IMR-90 (cell line): ENCODE measurements at regions of chr13 and their contacts with region 1.

Region 1: GRCh38 chr13:48094781-48095502 is at the start of gene MED4:
- DNase-seq: peak; percentile 91
- ATAC-seq: peak; percentile 99
- H3K4me3 ChIP-seq: peak within 1 kb of the TSS; percentile 73
- H3K27ac ChIP-seq: peak within 1 kb of the TSS; percentile 72
- H3K4me1 ChIP-seq: peaks cover 2% of the 10 kb centered on the region; the same call in 1 of the 2 replicates
- H3K27me3 ChIP-seq: no peaks in the 10 kb centered on the region
- CTCF ChIP-seq: peak; percentile 100
- POLR2A ChIP-seq: peak; percentile 94
- RAD21 ChIP-seq: peak; percentile 52
- total RNA-seq, gene MED4: 25.3 and 28.3 TPM in 2 replicates

Region 2: GRCh38 chr13:47794963-47795362 is 300.0 kb before region 1 on chr13:
- CTCF ChIA-PET with region 1: no interaction called
- POLR2A ChIA-PET with region 1: no interaction called
- dilution Hi-C with region 1: no loop called
- in situ Hi-C with region 1: no loop called
- intact Hi-C with region 1: loop called (anchors 10 kb)
- DNase-seq: peak; percentile 2
- ATAC-seq: no peak
- H3K4me3 ChIP-seq: no peak overlapping the region
- H3K27ac ChIP-seq: no peak overlapping the region
- H3K4me1 ChIP-seq: no peaks in the 10 kb centered on the region
- H3K27me3 ChIP-seq: peaks cover 2% of the 10 kb centered on the region; the same call in 1 of the 2 replicates
- CTCF ChIP-seq: peak; percentile 26; the same call in 1 of the 2 replicates
- POLR2A ChIP-seq: no peak
- RAD21 ChIP-seq: no peak

Region 3: GRCh38 chr13:48165063-48165462 is 70.1 kb after region 1 on chr13:
- CTCF ChIA-PET with region 1: no interaction called
- POLR2A ChIA-PET with region 1: interaction called, 10 read pairs
- dilution Hi-C with region 1: no loop called
- in situ Hi-C with region 1: no loop called
- intact Hi-C with region 1: no loop called
- DNase-seq: no peak
- ATAC-seq: no peak
- H3K4me3 ChIP-seq: no peak overlapping the region
- H3K27ac ChIP-seq: no peak overlapping the region
- H3K4me1 ChIP-seq: no peaks in the 10 kb centered on the region
- H3K27me3 ChIP-seq: peaks cover 17% of the 10 kb centered on the region
- CTCF ChIP-seq: no peak
- POLR2A ChIP-seq: no peak
- RAD21 ChIP-seq: no peak

Region 4: GRCh38 chr13:48303359-48304142 is 208.6 kb after region 1 on chr13 and contains the start of gene RB1:
- CTCF ChIA-PET with region 1: no interaction called
- POLR2A ChIA-PET with region 1: no interaction called
- dilution Hi-C with region 1: no loop called
- in situ Hi-C with region 1: no loop called
- intact Hi-C with region 1: loop called (anchors 1 kb)
- DNase-seq: peak; percentile 87
- ATAC-seq: peak; percentile 92
- H3K4me3 ChIP-seq: peak within 1 kb of the TSS; percentile 59
- H3K27ac ChIP-seq: peak within 1 kb of the TSS; percentile 76
- H3K4me1 ChIP-seq: no peaks in the 10 kb centered on the region
- H3K27me3 ChIP-seq: no peaks in the 10 kb centered on the region
- CTCF ChIP-seq: no peak
- POLR2A ChIP-seq: peak; percentile 90
- RAD21 ChIP-seq: no peak
- total RNA-seq, gene RB1: 15.4 and 23.1 TPM in 2 replicates